ENCODE measurements at regions of chr7 and their contacts with region 1.

Region 1: GRCh38 chr7:43582503-43583423 is at the start of gene STK17A:
- DNase-seq: peak; percentile 75 to 93
- ATAC-seq: peak; percentile 85 to 91
- H3K4me3 ChIP-seq: peak within 1 kb of the TSS; percentile 88
- H3K27ac ChIP-seq: peak within 1 kb of the TSS; percentile 87 to 94
- H3K4me1 ChIP-seq: peaks cover 39% of the 10 kb centered on the region
- CTCF ChIP-seq: peak; percentile 99
- EP300 ChIP-seq: no peak
- POLR2A ChIP-seq: peak; percentile 97
- RAD21 ChIP-seq: peak; percentile 96 to 100
- polyA plus RNA-seq, gene STK17A: 20.2 and 27.3 TPM in 2 replicates

Region 2: DNA sequence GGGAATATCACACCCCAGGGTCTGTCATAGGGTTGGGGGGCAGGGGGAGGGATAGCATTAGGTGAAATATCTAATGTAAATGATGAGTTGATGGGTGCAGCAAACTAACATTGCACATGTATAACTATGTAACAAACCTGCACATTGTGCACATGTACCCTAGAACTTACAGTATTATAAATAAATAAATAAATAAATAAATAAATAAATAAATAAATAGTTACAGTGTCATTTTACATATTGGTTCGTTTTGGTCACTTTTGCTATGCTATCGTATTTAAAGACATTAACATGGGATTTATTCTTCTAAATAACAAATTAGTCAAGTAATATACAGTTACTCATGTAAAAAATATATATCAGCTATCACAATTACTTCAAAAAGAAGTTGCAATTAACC is 241.6 kb before region 1 on chr7:
- CTCF ChIA-PET with region 1: no interaction called
- POLR2A ChIA-PET with region 1: no interaction called
- DNase-seq: no peak
- ATAC-seq: no peak
- H3K4me3 ChIP-seq: no peak overlapping the region
- H3K27ac ChIP-seq: no peak overlapping the region
- H3K4me1 ChIP-seq: no peaks in the 10 kb centered on the region
- CTCF ChIP-seq: no peak
- EP300 ChIP-seq: no peak
- POLR2A ChIP-seq: no peak
- RAD21 ChIP-seq: no peak

Region 3: DNA sequence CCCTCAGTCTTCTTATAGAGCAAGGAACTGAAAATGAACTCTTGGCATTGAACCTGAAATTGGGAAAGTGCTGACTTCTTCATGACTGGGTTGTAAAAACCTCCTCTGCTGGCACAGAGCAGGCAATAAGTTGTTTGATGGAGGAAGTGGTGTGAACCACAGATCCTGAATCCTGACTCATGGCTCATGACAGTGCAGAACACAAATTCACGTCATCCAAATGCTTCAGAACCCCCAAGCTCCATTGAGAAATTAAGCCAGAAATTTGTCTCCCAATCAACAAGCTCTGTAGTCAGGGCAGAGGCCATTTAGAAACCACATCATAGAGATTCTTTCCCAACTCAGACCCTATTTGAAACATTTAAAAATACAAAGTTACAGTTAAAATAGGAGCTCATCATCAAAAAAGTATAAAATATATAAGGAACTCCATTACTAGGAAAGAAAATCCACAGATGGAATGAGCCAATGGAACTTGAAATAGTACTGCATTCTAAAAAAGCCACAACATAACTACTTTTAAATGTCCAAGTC is 10.2 kb before region 1 on chr7:
- CTCF ChIA-PET with region 1: interaction called, 55 read pairs
- POLR2A ChIA-PET with region 1: interaction called, 25 read pairs
- DNase-seq: peak; percentile 49 to 94
- ATAC-seq: peak; percentile 96 to 98
- H3K4me3 ChIP-seq: no peak overlapping the region
- H3K27ac ChIP-seq: peak overlapping the region; percentile 71 to 87
- H3K4me1 ChIP-seq: peaks cover 28% of the 10 kb centered on the region
- CTCF ChIP-seq: no peak
- EP300 ChIP-seq: peak; percentile 28 to 86; a peak in 3 of 5 replicates
- POLR2A ChIP-seq: no peak
- RAD21 ChIP-seq: no peak

Region 4: DNA sequence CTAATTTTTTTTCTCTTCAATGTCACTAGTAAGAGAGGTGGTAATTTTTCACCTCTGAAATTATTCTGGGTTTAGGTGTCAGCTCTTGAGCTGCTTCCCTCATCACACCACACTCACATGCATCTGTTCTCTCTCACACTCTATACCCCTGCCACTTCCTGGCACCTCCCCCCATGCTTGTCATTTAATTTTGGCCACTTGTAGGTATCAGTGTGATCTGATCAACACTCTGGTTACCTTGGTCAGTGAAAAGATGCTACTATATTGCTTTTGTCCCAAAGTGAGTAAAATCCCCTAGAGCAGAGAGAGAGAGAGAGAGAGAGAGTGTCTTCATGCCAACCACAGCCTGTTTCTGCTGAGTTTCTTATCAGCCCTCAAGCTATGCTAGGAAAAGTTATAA is 42.7 kb after region 1 on chr7:
- CTCF ChIA-PET with region 1: interaction called, 22 read pairs
- POLR2A ChIA-PET with region 1: interaction called, 7 read pairs
- DNase-seq: no peak
- ATAC-seq: peak in 1 of 2 experiments; percentile 16; a peak in 2 of 6 replicates
- H3K4me3 ChIP-seq: no peak overlapping the region
- H3K27ac ChIP-seq: no peak overlapping the region
- H3K4me1 ChIP-seq: peaks cover 4% of the 10 kb centered on the region; the same call in 2 of the 3 replicates
- CTCF ChIP-seq: no peak
- EP300 ChIP-seq: no peak
- POLR2A ChIP-seq: no peak
- RAD21 ChIP-seq: no peak

Region 5: GRCh38 chr7:43669286-43670081 is 86.7 kb after region 1 on chr7:
- CTCF ChIA-PET with region 1: interaction called, 15 read pairs
- POLR2A ChIA-PET with region 1: interaction called, 6 read pairs
- DNase-seq: peak in 1 of 2 experiments; percentile 30
- ATAC-seq: peak; percentile 40 to 56; a peak in 3 of 6 replicates
- H3K4me3 ChIP-seq: no peak overlapping the region
- H3K27ac ChIP-seq: peak overlapping the region; percentile 67 to 85
- H3K4me1 ChIP-seq: peaks cover 75% of the 10 kb centered on the region
- CTCF ChIP-seq: no peak
- EP300 ChIP-seq: no peak
- POLR2A ChIP-seq: no peak
- RAD21 ChIP-seq: no peak

Region 6: DNA sequence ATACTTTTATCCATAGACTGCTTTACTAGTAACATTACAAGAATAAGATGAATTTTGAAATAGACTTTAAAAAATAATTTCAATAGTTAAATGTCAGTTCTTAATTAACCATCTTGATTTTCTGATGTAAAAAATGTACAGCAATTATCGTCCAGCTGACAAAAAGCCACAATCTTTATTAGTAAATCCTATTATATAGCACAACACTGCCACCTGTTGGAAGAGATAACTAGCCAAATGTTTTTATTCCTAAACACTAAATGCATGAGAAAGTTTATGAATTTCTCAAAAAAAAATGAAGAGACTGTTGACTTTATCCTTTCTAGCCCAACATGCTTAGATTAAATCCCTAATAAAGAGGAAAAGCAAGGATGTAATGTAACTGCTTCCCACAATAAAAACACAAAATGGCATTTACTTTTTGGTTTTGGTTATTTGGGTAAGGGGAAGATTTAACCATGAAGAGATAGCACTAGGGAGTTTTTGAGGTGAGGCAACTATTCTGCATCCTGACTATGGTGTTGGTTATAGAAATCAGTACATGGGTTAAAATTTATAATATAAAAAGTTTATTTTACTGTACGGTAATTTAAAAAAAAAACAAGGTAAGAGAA is 138.5 kb after region 1 on chr7:
- CTCF ChIA-PET with region 1: interaction called, 63 read pairs
- POLR2A ChIA-PET with region 1: interaction called, 19 read pairs
- DNase-seq: peak; percentile 23 to 48
- ATAC-seq: no peak; a peak in 1 of 6 replicates
- H3K4me3 ChIP-seq: no peak overlapping the region
- H3K27ac ChIP-seq: no peak overlapping the region
- H3K4me1 ChIP-seq: peaks cover 8% of the 10 kb centered on the region
- CTCF ChIP-seq: peak; percentile 88
- EP300 ChIP-seq: no peak
- POLR2A ChIP-seq: no peak
- RAD21 ChIP-seq: peak; percentile 71 to 83

Region 7: GRCh38 chr7:43834463-43835251 is 251.9 kb after region 1 on chr7:
- CTCF ChIA-PET with region 1: interaction called, 85 read pairs
- POLR2A ChIA-PET with region 1: interaction called, 3 read pairs
- DNase-seq: peak in 1 of 2 experiments; percentile 66
- ATAC-seq: no peak
- H3K4me3 ChIP-seq: 0 out of 3 replicates have a peak overlapping the region, but pooled peaks have one; percentile 20
- H3K27ac ChIP-seq: peak overlapping the region in 1 of 2 experiments; percentile 39; a peak in 1 of 6 replicates
- H3K4me1 ChIP-seq: peaks cover 3% of the 10 kb centered on the region; the same call in 1 of the 3 replicates
- CTCF ChIP-seq: no peak
- EP300 ChIP-seq: no peak
- POLR2A ChIP-seq: no peak
- RAD21 ChIP-seq: no peak

Measured in A549 (cell line).